ENCODE measurements at regions of chr10 and their contacts with region 1.

Region 1: GRCh38 chr10:67917169-67917568 is 32.7 kb downstream of the SIRT1 start:
- DNase-seq: no peak
- ATAC-seq: no peak
- H3K4me3 ChIP-seq: no peak overlapping the region
- H3K27ac ChIP-seq: no peak overlapping the region
- H3K4me1 ChIP-seq: peaks cover 6% of the 10 kb centered on the region; the same call in 1 of the 3 replicates
- CTCF ChIP-seq: no peak
- EP300 ChIP-seq: no peak
- POLR2A ChIP-seq: no peak
- RAD21 ChIP-seq: no peak

Region 2: GRCh38 chr10:67779465-67780203 is 137.5 kb before region 1 on chr10:
- CTCF ChIA-PET with region 1: no interaction called
- POLR2A ChIA-PET with region 1: no interaction called
- DNase-seq: peak; percentile 62 to 87
- ATAC-seq: peak; percentile 78 to 89
- H3K4me3 ChIP-seq: no peak overlapping the region
- H3K27ac ChIP-seq: no peak overlapping the region
- H3K4me1 ChIP-seq: 0 out of 3 replicates have a peak, but pooled peaks cover 4% of the 10 kb centered on the region
- CTCF ChIP-seq: peak; percentile 93
- EP300 ChIP-seq: no peak
- POLR2A ChIP-seq: no peak
- RAD21 ChIP-seq: peak; percentile 92 to 96

Region 3: GRCh38 chr10:67884313-67884841 is 32.8 kb before region 1 on chr10 and contains the start of gene SIRT1:
- CTCF ChIA-PET with region 1: no interaction called
- POLR2A ChIA-PET with region 1: interaction called, 13 read pairs
- DNase-seq: peak; percentile 91 to 96
- ATAC-seq: peak; percentile 91 to 92
- H3K4me3 ChIP-seq: peak within 1 kb of the TSS; percentile 69
- H3K27ac ChIP-seq: peak within 1 kb of the TSS; percentile 94 to 95
- H3K4me1 ChIP-seq: peaks cover 11% of the 10 kb centered on the region
- CTCF ChIP-seq: peak; percentile 38
- EP300 ChIP-seq: no peak
- POLR2A ChIP-seq: peak; percentile 97
- RAD21 ChIP-seq: no peak; a peak in 2 of 5 replicates
- polyA plus RNA-seq, gene SIRT1: 30.5 and 34.8 TPM in 2 replicates

Region 4: DNA sequence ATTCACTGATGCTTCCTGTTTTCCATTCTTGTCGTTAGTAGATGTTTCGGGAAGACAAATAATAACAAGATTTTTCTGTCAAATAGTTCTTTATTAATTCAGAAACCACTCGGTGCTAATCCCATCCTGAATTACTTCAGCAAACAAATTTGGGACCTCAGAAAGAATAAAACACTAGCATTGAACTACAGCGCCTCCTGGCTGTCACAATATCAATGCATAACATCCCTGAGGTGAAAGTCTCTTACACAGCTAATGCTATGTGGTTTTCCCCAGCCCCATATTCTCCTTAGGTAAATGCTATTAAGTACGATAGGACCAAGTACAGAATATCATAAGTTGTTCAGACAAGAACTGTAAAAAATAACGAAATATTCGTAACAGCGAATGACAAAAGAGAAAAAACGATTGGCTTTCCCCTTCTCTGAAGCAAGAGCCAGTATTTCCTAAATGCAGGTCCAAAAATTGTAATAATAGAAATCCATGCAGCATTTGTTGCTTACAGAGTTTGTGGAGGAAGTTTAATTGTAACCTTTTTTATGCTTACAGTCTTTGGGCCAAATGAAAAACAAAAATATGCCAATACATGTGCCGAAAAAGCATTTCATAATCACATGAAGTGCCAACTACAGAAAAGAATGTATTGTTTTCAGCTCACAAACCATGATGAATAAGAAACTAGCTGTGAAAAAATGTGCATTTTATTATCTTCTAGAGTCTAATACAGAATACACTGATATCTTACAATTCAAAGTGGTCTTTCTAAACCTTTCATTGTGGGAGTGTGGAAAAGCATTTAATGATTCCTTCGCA is 239.4 kb after region 1 on chr10:
- CTCF ChIA-PET with region 1: no interaction called
- POLR2A ChIA-PET with region 1: no interaction called
- DNase-seq: peak; percentile 35 to 77
- ATAC-seq: peak in 1 of 2 experiments; percentile 10; a peak in 1 of 6 replicates
- H3K4me3 ChIP-seq: no peak overlapping the region
- H3K27ac ChIP-seq: peak overlapping the region; percentile 86 to 92
- H3K4me1 ChIP-seq: peaks cover 57% of the 10 kb centered on the region
- CTCF ChIP-seq: peak; percentile 91
- EP300 ChIP-seq: no peak
- POLR2A ChIP-seq: no peak
- RAD21 ChIP-seq: peak; percentile 90 to 95

Region 5: GRCh38 chr10:68208424-68209042 is 291.4 kb after region 1 on chr10:
- CTCF ChIA-PET with region 1: no interaction called
- POLR2A ChIA-PET with region 1: no interaction called
- DNase-seq: peak; percentile 78 to 90
- ATAC-seq: peak; percentile 96 to 99
- H3K4me3 ChIP-seq: no peak overlapping the region
- H3K27ac ChIP-seq: peak overlapping the region; percentile 26 to 76; a peak in 5 of 6 replicates
- H3K4me1 ChIP-seq: peaks cover 11% of the 10 kb centered on the region; the same call in 2 of the 3 replicates
- CTCF ChIP-seq: peak; percentile 92
- EP300 ChIP-seq: no peak
- POLR2A ChIP-seq: no peak
- RAD21 ChIP-seq: peak; percentile 97 to 99

Measured in A549 (cell line).